Gastrocnemius medialis (tissue), 4 donors: ENCODE measurements at regions of chr11 and their contacts with region 1.

Region 1: GRCh38 chr11:73876424-73877300 is at the starts of genes COA4 and PAAF1:
- DNase-seq: peak; percentile 91 to 94
- ATAC-seq: peak; percentile 97 to 99
- H3K4me3 ChIP-seq: peak within 1 kb of the TSS; percentile 77 to 95 (median 90)
- H3K27ac ChIP-seq: peak within 1 kb of the TSS; percentile 89 to 96 (median 91)
- H3K4me1 ChIP-seq: peaks cover 18 to 35% of the 10 kb centered on the region in 2 donors
- H3K27me3 ChIP-seq: no peaks in the 10 kb centered on the region
- CTCF ChIP-seq: peak in 1 of 5 experiments; percentile 16
- POLR2A ChIP-seq: peak; percentile 52 to 66
- total RNA-seq, gene COA4: 52.3 to 102 (median 86.2) TPM
- total RNA-seq, gene PAAF1: 2.2 to 11.8 (median 4.4) TPM

Region 2: GRCh38 chr11:73760679-73761402 is 115.8 kb before region 1 on chr11 and contains the start of gene RAB6A:
- in situ Hi-C with region 1: no loop called
- intact Hi-C with region 1: loop called (anchors 5 kb)
- DNase-seq: peak; percentile 100
- ATAC-seq: peak; percentile 96 to 97
- H3K4me3 ChIP-seq: peak within 1 kb of the TSS; percentile 93 to 100 (median 95)
- H3K27ac ChIP-seq: peak within 1 kb of the TSS; percentile 93 to 100 (median 98)
- H3K4me1 ChIP-seq: peaks cover 20 to 21% of the 10 kb centered on the region in 2 donors
- H3K27me3 ChIP-seq: no peaks in the 10 kb centered on the region
- CTCF ChIP-seq: peak; percentile 41 to 59 (median 54)
- POLR2A ChIP-seq: peak; percentile 91 to 94
- total RNA-seq, gene RAB6A: 95.5 to 124 (median 110) TPM

Region 3: GRCh38 chr11:73787643-73788537 is 88.8 kb before region 1 on chr11 and contains the start of gene MRPL48:
- in situ Hi-C with region 1: loop called in 1 of 4 experiments (anchors 10 kb)
- intact Hi-C with region 1: loop called (anchors 5 kb)
- DNase-seq: peak; percentile 87 to 93
- ATAC-seq: peak; percentile 93 to 96
- H3K4me3 ChIP-seq: peak within 1 kb of the TSS; percentile 79 to 90 (median 88)
- H3K27ac ChIP-seq: peak within 1 kb of the TSS; percentile 84 to 90 (median 85)
- H3K4me1 ChIP-seq: peaks cover 8 to 16% of the 10 kb centered on the region in 2 donors
- H3K27me3 ChIP-seq: no peaks in the 10 kb centered on the region
- CTCF ChIP-seq: no peak
- POLR2A ChIP-seq: peak in 1 of 2 donors; percentile 12
- total RNA-seq, gene MRPL48: 9.0 to 29.1 (median 13.4) TPM

Region 4: GRCh38 chr11:73950869-73951710 is 74.4 kb after region 1 on chr11 and contains the start of gene DNAJB13:
- in situ Hi-C with region 1: no loop called
- intact Hi-C with region 1: no loop called
- DNase-seq: no peak
- ATAC-seq: peak in 1 of 2 donors; percentile 55
- H3K4me3 ChIP-seq: no peak within 1 kb of the TSS
- H3K27ac ChIP-seq: no peak within 1 kb of the TSS
- H3K4me1 ChIP-seq: no peaks in the 10 kb centered on the region
- H3K27me3 ChIP-seq: no peaks in the 10 kb centered on the region
- CTCF ChIP-seq: no peak
- POLR2A ChIP-seq: no peak
- total RNA-seq, gene DNAJB13: not detected